ENCODE measurements at regions of chr20 and their contacts with region 1.

Region 1: GRCh38 chr20:45771182-45771759 is 20.4 kb downstream of the WFDC3 start:
- DNase-seq: peak; percentile 79

Region 2: DNA sequence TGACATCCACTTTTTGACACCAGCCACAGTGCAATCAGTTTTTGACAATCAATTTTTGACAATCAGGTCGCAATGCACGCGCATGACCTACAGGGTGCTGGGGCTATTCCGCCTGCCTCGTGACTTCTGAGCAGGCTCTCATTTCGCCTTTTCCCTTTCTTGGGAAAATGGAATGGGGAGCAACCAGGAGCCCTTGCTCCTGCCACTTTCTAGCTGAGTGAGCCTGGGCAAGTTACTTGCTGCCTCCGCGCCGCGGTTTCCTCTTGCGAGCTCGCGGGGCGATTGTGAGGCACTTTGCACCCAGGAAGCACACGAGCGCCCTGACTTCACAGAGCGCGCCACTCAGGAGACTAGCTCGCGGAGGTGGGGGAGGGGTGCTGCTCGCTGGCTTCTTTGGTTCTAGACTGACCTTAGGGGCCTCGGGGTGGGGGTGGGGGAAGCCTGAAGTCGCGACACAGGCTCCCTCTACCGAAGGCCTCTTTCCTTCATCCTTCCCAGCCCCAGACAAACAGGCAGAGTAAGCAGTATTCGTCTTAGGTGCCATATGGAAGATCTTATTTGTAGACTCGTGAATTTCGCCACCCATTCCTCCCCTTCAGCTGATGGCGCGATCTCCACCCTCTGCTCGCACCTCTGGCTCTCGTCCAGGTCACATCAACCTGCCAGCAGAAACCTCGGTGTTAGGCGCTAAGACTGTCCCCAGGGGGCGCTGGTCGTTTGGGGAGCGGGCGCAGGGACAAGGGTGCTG is 397.7 kb before region 1 on chr20:
- CTCF ChIA-PET with region 1: interaction called, 11 read pairs
- POLR2A ChIA-PET with region 1: interaction called, 3 read pairs
- DNase-seq: peak; percentile 83

Region 3: GRCh38 chr20:45456632-45457031 is 314.6 kb before region 1 on chr20:
- CTCF ChIA-PET with region 1: interaction called, 13 read pairs
- POLR2A ChIA-PET with region 1: no interaction called
- DNase-seq: peak; percentile 49

Region 4: DNA sequence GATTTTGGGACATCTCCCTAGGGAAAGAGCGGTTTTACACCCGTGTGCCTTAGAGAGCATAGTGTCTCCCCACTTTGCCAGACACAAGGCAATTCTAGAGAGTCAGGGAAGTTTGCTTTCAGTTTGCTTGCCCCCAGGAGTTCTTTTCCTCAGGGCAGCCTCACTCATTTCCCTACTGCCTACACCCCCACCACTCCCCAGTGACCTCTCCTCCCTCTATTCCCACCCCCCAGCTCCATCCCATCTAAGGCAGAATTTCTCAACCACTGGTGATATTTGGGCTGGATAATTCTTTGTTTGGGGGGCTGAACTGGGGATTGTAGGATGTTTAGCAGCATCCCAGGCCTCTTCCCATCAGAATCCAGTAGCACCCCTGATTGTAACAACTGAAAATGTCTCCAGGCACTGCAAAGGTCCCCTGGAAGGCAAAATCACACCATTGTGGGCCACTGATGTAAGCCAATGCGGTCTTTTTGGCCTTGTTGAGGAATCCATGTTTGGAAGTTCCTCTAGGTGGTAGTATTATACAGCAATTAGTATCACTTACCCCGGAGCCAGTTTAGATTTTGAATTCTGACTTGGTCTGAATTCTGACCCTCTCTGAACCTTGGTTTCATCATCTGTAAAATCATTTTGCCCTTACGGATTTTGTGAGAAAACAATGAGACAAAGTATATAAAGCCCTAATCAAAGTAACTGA is 225.4 kb before region 1 on chr20:
- CTCF ChIA-PET with region 1: interaction called, 10 read pairs
- POLR2A ChIA-PET with region 1: no interaction called
- DNase-seq: peak; percentile 39

Measured in HEK293T (cell line).